Thyroid gland (tissue), 4 donors: ENCODE measurements at regions of chr1 and their contacts with region 1.

Region 1: DNA sequence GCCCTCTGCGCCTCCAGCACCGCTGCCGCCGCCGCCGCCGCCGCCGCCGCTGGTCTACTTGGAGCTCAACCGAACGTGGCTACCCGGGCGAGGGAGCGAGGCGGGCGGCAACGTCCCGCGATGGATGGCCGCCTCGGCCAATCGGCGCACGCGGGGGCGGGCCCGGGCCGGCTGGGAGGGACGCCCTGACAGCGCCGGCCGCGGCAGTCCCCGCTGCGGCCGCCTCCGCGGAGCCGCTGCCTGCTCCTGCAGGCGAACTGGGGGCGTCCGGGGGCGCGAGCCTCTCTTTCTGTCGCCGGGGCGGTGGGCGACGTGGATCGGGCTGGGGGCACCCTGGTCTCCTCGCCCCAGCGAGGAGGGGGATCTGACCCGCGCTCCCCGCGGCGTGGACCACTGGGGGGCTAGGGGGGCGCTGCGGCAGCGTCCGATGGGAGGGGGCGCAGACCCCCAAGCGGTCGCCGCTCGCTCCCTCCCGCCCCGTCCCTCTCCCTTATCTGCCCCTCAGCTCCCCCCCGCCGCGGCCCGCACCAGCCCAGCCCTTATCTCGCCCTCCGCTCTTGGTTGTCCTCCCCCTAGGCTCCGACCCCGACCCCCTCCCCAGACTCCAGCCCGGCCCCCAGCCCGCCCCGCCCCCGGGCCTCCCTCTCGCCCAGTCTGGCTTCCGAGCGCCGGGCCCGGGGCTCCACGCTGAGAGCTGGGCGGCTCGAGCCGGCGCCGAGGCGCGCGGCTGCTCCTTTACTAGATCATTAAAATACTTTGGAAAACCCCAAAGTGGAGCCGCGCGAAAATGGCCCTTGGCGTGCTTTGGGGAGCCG is at the start of gene SSBP3:
- DNase-seq: peak; percentile 91 to 93
- H3K4me3 ChIP-seq: peak within 1 kb of the TSS; percentile 51 to 96 (median 79)
- H3K27ac ChIP-seq: peak within 1 kb of the TSS; percentile 86 to 95 (median 89)
- H3K4me1 ChIP-seq: peaks cover 25 to 39% of the 10 kb centered on the region in 2 donors
- H3K27me3 ChIP-seq: no peaks in the 10 kb centered on the region
- CTCF ChIP-seq: peak in 3 of 6 experiments; percentile 5 to 30 (median 7)
- POLR2A ChIP-seq: peak; percentile 63 to 99
- total RNA-seq, gene SSBP3: 15.4 to 23.0 (median 18.2) TPM

Region 2: DNA sequence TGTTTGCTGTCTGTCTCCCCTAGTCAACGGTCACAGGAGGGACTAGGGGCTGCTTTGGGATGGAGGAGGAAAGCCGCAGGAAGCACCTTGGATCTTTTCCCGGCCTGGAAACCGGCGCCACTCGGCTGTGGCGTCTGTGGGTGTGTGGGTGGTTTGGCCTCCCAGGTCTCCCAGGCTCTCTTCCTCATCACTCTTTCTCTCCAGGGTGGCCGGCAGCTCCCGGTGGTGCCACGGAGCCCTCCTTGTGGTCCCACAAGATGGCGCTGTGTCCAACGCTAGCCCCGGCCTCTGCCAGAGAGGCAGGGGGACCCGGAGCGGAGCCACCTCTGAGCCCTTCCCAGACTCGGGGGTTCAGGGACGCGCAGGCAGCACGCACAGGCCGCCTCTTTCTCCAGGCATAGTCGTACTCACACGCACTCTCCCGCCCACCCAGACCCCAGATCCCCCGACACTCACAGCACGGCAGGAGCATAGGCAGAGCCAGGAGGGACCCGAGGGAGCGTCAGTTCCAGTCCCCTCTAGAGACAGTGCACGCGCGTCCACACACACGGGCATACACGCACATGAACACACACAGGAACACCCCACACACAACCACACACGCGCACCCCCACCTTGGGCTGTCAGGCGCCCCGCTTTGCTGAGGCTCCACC is 284.9 kb before region 1 on chr1:
- intact Hi-C with region 1: loop called (anchors 5 kb)
- DNase-seq: peak; percentile 81 to 85
- H3K4me3 ChIP-seq: peak overlapping the region in 1 of 3 donors; percentile 1
- H3K27ac ChIP-seq: no peak overlapping the region
- H3K4me1 ChIP-seq: peaks cover 0 to 18% of the 10 kb centered on the region in 2 donors
- H3K27me3 ChIP-seq: no peaks in the 10 kb centered on the region
- CTCF ChIP-seq: peak; percentile 64 to 82 (median 72)
- POLR2A ChIP-seq: no peak

Region 3: GRCh38 chr1:54273092-54273794 is 133.3 kb before region 1 on chr1:
- intact Hi-C with region 1: loop called (anchors 5 kb)
- DNase-seq: peak; percentile 85 to 86
- H3K4me3 ChIP-seq: no peak overlapping the region
- H3K27ac ChIP-seq: peak overlapping the region; percentile 71 to 94 (median 86)
- H3K4me1 ChIP-seq: peaks cover 47 to 75% of the 10 kb centered on the region in 2 donors
- H3K27me3 ChIP-seq: no peaks in the 10 kb centered on the region
- CTCF ChIP-seq: peak in 5 of 6 experiments; percentile 24 to 77 (median 63)
- POLR2A ChIP-seq: peak in 1 of 2 donors; percentile 32

Region 4: GRCh38 chr1:54284781-54285529 is 121.6 kb before region 1 on chr1:
- intact Hi-C with region 1: no loop called
- DNase-seq: no peak
- H3K4me3 ChIP-seq: no peak overlapping the region
- H3K27ac ChIP-seq: no peak overlapping the region
- H3K4me1 ChIP-seq: peaks cover 25 to 31% of the 10 kb centered on the region in 2 donors
- H3K27me3 ChIP-seq: no peaks in the 10 kb centered on the region
- CTCF ChIP-seq: no peak
- POLR2A ChIP-seq: no peak

Region 5: DNA sequence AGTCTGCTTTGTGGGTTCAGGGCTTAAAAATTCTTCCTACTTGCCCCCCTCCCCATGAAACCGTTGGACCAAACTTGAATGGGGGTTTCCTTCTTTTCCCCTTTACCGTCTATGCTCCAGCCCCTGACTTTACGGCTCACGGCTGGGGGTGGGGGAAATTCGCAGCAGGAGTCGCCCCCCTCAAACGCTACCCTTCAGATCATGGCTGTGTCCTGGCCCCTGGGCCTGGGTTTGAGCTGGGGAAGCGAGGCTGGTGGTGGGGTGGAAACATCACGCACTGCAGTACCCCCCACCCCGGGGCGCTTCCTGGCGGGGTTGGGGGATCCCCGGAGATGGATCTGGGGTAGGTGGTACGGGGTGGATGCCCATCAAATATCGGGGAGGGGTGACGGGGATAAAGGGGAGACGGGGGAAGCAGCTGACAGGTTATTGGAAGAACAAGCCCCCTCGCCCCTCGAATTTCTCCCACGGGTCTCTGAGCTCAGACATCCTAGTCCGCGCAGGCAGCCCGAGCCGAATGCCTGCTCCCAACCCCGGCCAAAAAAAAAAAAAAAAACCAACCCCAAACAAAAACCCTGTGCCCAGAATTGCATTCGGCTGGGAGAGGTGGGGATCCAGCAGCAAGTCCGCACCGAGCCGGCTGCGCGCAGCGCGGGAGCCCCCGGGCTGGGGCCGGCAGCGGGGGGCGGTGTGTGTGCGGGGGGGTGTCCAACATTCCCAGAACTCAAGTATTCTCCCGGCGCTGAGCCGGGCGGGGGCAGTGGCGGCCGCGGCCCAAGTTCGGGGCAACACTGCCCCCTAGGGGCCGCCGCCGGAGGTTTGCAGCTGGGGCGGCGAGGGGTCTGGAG is 82.5 kb after region 1 on chr1:
- intact Hi-C with region 1: loop called (anchors 2 kb)
- DNase-seq: peak; percentile 81
- H3K4me3 ChIP-seq: peak overlapping the region; percentile 37 to 83 (median 47)
- H3K27ac ChIP-seq: peak overlapping the region; percentile 78 to 97 (median 95)
- H3K4me1 ChIP-seq: peaks cover 7 to 18% of the 10 kb centered on the region in 2 donors
- H3K27me3 ChIP-seq: no peaks in the 10 kb centered on the region
- CTCF ChIP-seq: peak; percentile 81 to 97 (median 96)
- POLR2A ChIP-seq: peak in 1 of 2 donors; percentile 41